ENCODE measurements at regions of chr16 and their contacts with region 1.

Region 1: DNA sequence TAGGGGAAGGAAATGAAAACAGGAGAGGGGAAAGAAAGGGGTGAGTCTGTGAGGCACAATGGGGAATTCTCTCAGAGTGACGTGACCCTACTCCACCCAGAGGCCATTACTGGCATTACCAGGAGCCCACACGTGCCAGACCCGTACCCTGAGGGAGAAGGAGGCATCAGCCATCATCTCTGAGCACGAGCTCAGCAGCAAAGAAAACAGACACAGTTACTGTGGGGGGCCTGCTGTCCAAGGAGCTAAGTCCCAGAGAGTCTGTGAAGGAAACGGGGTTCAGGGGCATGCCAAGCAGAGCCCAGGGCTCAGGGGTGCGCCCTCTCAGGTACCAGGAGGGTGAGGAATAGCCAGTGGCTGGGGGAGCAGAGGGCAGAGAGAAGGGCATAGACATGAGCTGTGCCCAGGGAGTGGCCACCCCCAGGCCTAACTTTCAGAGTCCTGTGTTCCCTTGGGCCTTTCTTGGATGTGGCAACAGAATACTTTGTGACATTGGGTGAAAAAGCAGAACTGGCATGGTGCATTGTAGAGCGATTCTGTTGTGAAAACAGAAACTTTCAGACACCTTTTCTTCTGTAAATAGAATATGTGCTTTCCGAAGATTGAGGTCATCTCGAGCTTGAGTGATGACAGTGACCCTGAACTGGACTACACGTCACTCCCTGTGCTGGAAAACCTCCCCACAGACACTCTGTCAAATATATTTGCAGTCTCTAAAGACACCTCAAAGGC is 11.3 kb downstream of the TAF1C start:
- DNase-seq: peak; percentile 58
- H3K4me3 ChIP-seq: no peak overlapping the region
- H3K27ac ChIP-seq: peak overlapping the region in 1 of 4 donors; percentile 79
- H3K4me1 ChIP-seq: peaks cover 14 to 29% (median 17%) of the 10 kb centered on the region in 4 donors
- H3K27me3 ChIP-seq: no peaks in the 10 kb centered on the region
- CTCF ChIP-seq: peak; percentile 39 to 89 (median 82)
- EP300 ChIP-seq: no peak
- POLR2A ChIP-seq: no peak

Region 2: DNA sequence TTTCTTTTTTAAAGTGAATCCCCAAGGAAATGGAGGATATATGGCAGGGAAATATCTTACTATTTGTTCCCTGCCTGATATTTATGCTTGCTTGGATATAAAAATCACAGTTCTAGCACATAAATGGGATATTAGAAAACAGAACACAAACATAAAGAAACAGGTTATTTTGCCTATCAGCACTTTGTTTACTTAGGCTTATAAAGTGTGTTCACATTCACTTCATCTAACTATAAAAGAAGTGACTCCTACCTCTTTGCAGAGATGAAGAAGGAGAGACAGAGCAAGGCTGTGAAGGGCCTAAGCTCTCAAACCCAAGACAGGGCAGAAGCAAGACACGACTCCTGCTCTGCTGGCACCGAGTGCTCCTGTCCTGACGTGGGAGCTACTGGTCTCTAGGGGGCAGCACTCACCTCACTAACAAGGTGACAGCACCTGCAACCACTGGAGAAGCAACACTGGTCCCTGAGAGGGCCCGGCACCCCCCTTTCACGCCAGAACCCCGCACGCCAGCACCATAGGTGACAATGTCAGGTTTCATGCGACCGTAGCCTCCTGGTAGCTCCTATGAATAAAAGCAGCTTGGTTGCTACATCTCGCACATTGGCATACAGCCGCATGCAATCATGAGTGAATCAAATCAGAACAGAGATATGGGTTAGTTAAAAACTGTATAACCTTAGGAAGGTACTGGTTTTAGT is 90.8 kb before region 1 on chr16:
- in situ Hi-C with region 1: loop called in 2 of 4 experiments (anchors 10 kb)
- intact Hi-C with region 1: no loop called
- DNase-seq: peak; percentile 74
- H3K4me3 ChIP-seq: no peak overlapping the region
- H3K27ac ChIP-seq: no peak overlapping the region
- H3K4me1 ChIP-seq: peaks cover 0 to 3% (median 0%) of the 10 kb centered on the region in 4 donors
- H3K27me3 ChIP-seq: no peaks in the 10 kb centered on the region
- CTCF ChIP-seq: peak; percentile 58 to 70 (median 65)
- EP300 ChIP-seq: no peak
- POLR2A ChIP-seq: no peak

Region 3: GRCh38 chr16:84109598-84110325 is 65.8 kb before region 1 on chr16:
- in situ Hi-C with region 1: no loop called
- intact Hi-C with region 1: no loop called
- DNase-seq: no peak
- H3K4me3 ChIP-seq: no peak overlapping the region
- H3K27ac ChIP-seq: no peak overlapping the region
- H3K4me1 ChIP-seq: peaks cover under 1 to 22% (median 4%) of the 10 kb centered on the region in 4 donors
- H3K27me3 ChIP-seq: no peaks in the 10 kb centered on the region
- CTCF ChIP-seq: no peak
- EP300 ChIP-seq: no peak
- POLR2A ChIP-seq: no peak

Measured in transverse colon (tissue), 4 donors.